Left cardiac atrium (tissue), 4 donors: ENCODE measurements at regions of chr11 and their contacts with region 1.

Region 1: DNA sequence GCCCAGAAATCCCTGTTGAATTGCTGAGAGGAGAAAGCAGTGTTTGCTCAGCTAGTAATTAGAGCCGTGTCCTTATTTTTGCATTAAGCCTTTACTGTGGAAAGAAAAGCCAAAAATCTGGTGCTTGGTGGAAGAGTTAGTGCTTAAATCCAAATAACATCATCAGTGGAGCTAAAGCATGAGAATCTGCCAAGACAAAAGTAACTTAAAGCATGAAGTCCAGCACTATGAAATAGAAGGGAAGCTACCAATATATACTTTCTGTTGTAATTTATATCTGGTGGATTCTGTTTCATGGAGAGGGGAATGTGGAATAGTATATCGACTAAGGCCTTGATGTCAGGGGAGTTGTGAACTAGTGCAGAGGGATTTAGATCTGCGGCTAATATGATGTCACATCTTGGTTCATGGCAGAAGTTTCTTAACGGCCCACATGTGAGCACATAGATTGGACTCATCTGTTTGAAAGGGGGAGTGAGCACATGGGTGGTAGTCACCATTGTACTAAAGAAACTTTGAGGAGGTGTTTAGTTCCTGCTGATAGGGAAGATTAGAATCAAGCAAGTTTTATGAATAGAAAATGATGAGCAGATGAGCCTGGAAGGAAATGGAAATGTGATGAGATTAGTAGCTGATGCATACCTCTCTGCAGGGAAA is 224.4 kb upstream of the MTNR1B start:
- DNase-seq: no peak
- ATAC-seq: no peak

Region 2: DNA sequence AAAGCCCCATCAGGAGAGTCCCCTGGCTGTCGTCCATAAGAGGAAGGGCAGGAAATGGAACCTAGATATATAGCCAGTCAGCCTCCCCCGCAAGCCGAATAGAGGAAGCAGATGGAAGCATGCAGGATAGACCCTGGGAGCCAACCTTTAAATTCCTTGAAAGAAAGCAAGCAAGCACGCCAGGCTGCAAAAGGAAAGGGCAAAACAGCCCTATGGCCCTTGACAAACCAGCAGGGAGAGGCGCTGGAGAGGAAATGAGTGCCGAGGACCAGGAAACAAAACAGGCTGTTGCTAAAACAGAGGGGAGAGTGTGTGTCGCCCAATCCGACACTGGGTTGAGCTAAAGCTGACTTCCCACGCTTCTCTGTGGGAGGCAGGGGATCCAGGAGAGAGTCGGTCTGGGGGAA is 20.9 kb after region 1 on chr11:
- intact Hi-C with region 1: no loop called
- DNase-seq: peak; percentile 40
- ATAC-seq: peak; percentile 70 to 74

Region 3: GRCh38 chr11:92870196-92870832 is 125.3 kb after region 1 on chr11:
- intact Hi-C with region 1: loop called in 1 of 2 experiments (anchors 10 kb)
- DNase-seq: no peak
- ATAC-seq: peak in 1 of 2 donors; percentile 48